A549 (cell line): ENCODE measurements at regions of chr17 and their contacts with region 1.

Region 1: GRCh38 chr17:34637548-34638525 is 58.5 kb downstream of the TMEM132E start:
- DNase-seq: peak; percentile 67 to 71
- ATAC-seq: peak; percentile 83 to 98
- H3K4me3 ChIP-seq: no peak overlapping the region
- H3K27ac ChIP-seq: peak overlapping the region in 1 of 2 experiments; percentile 51; a peak in 1 of 6 replicates
- H3K4me1 ChIP-seq: no peaks in the 10 kb centered on the region
- CTCF ChIP-seq: peak; percentile 79
- EP300 ChIP-seq: no peak
- POLR2A ChIP-seq: no peak
- RAD21 ChIP-seq: peak; percentile 72 to 78

Region 2: DNA sequence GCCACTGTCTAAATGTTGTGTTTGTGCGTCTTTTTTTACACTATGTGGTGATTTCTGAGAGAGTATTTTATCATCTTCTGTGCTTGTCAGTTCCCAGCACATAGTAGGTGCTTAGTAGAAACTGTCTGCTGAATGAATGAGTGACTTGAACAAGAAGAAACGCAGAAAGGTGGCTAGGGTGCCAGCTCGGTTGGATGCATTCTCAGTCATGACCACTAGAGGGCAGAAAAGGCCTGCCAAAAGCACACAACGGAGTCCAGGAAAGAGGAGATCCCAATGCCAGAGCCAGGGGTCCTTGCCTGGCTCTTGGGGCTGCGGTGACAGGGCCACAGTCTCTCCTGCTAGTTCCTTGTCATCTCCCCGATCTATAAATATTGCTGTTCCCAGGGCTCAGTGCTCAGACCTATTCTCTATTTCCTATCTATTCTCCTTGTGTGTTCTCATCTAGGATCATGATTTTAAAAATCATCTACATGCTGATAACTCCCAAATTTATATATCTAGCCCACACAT is 217.5 kb before region 1 on chr17:
- CTCF ChIA-PET with region 1: interaction called, 40 read pairs
- POLR2A ChIA-PET with region 1: no interaction called
- DNase-seq: peak; percentile 66 to 81
- ATAC-seq: peak; percentile 60 to 89; a peak in 5 of 6 replicates
- H3K4me3 ChIP-seq: no peak overlapping the region
- H3K27ac ChIP-seq: no peak overlapping the region
- H3K4me1 ChIP-seq: no peaks in the 10 kb centered on the region
- CTCF ChIP-seq: peak; percentile 91
- EP300 ChIP-seq: no peak
- POLR2A ChIP-seq: no peak
- RAD21 ChIP-seq: peak; percentile 91 to 96

Region 3: DNA sequence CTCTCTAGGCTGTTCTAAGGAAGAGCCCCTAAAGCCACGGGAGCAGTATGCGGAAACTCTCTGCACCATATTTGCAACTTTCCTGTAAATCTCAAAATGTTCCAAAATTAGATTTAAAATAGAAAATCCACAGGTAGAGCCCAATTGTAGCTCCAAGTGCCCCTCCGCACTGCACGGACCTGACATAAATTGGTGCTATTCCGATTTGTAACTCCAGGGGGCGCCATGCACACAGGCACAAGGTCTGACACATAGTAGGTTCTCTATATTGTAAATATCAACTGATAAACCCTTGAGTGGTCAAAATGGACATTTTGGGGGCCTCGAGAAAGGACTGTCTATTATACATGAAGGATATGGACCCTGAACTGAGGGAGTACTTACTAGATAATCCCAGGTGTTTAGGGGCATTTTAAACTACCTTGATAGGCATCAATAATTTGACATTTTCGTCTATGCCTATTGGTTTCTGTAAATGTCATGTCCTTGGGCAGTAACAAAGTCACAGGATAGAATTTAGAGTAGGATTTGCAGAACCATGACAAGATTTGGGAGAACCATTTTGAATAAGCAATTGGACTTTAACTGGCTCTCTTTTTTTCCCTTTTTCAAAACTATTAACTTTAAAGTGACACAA is 95.0 kb before region 1 on chr17:
- CTCF ChIA-PET with region 1: interaction called, 44 read pairs
- POLR2A ChIA-PET with region 1: no interaction called
- DNase-seq: peak; percentile 30 to 40
- ATAC-seq: peak in 1 of 2 experiments; percentile 83; a peak in 3 of 6 replicates
- H3K4me3 ChIP-seq: no peak overlapping the region
- H3K27ac ChIP-seq: no peak overlapping the region
- H3K4me1 ChIP-seq: no peaks in the 10 kb centered on the region
- CTCF ChIP-seq: peak; percentile 94
- EP300 ChIP-seq: no peak
- POLR2A ChIP-seq: no peak
- RAD21 ChIP-seq: peak; percentile 86 to 89

Region 4: DNA sequence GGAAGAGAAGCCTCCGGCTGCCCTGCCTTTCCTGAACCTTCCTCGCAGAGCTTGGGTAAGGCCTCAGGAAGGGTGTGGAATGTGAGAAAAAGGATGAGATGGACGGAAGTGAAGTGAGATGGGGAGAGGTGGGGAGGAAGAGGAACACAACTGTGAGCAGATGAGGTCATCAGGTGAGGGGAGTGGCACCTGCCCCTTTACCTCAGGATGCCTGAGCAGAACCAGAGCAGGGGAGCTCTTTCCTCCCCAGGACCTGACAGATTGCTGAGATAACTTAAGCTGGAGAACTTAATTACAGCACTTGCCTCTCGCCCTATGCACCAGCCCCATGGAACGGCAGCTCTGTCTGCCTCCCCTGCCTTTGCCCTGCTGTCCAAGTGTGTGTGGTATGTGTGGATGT is 28.6 kb before region 1 on chr17:
- CTCF ChIA-PET with region 1: interaction called, 10 read pairs
- POLR2A ChIA-PET with region 1: no interaction called
- DNase-seq: no peak
- ATAC-seq: 0 out of 6 replicates have a peak, but pooled peaks of 1 of the 2 experiments have one; percentile 35
- H3K4me3 ChIP-seq: no peak overlapping the region
- H3K27ac ChIP-seq: no peak overlapping the region
- H3K4me1 ChIP-seq: no peaks in the 10 kb centered on the region
- CTCF ChIP-seq: no peak
- EP300 ChIP-seq: no peak
- POLR2A ChIP-seq: no peak
- RAD21 ChIP-seq: no peak

Region 5: GRCh38 chr17:34626141-34626681 is 11.6 kb before region 1 on chr17:
- CTCF ChIA-PET with region 1: interaction called, 49 read pairs
- POLR2A ChIA-PET with region 1: no interaction called
- DNase-seq: peak in 1 of 2 experiments; percentile 9
- ATAC-seq: peak in 1 of 2 experiments; percentile 65; a peak in 3 of 6 replicates
- H3K4me3 ChIP-seq: no peak overlapping the region
- H3K27ac ChIP-seq: no peak overlapping the region
- H3K4me1 ChIP-seq: no peaks in the 10 kb centered on the region
- CTCF ChIP-seq: no peak
- EP300 ChIP-seq: no peak
- POLR2A ChIP-seq: no peak
- RAD21 ChIP-seq: no peak

Region 6: DNA sequence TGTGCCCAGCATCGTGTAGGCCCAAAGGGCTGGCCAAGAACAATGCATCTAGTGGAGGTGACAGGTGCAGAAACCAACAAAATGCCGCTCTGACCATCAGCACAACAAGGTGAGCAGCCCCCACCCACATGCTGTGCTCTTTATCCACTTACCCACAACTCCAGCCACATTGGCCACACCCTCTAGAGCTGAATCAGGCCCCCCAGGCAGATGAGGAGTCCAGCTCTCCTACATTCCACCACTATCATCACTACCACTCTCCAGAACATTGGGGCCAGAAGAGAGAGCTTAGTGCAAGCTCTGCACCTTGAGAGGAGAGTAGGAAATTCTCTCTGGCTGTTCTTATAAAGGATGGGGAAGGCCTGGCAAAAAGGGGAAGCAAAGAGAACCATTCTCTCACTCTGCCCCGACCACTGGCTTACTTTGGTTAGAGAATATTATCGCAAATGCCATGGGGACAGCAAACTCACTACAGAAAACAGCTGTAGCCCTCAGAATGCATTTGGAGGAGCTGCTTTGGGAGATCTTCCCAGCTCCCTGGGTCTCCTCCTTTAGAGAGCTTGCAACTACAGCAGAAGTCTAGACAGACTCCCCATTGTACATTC is 16.5 kb after region 1 on chr17:
- CTCF ChIA-PET with region 1: interaction called, 47 read pairs
- POLR2A ChIA-PET with region 1: no interaction called
- DNase-seq: no peak
- ATAC-seq: no peak
- H3K4me3 ChIP-seq: no peak overlapping the region
- H3K27ac ChIP-seq: no peak overlapping the region
- H3K4me1 ChIP-seq: no peaks in the 10 kb centered on the region
- CTCF ChIP-seq: no peak
- EP300 ChIP-seq: no peak
- POLR2A ChIP-seq: no peak
- RAD21 ChIP-seq: no peak

Region 7: DNA sequence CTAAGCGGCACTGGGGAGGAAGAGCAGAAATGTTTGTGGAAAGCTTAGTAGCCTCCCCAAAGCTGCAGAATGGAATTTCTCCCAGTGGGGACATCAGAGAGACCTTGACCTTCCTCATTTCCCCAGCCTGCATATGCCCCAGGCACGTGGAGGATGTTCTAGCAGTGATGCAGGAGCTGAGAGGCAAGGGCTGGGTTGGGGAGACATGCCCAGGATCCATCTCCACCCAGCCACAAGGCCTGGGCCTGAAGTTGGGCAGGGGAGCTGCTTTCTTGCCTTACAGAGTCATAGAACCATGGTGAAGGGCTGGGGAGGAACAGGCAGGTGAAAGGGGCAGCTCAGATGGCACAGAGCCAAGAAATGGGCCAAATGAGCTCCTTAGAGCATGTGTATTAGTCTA is 45.6 kb after region 1 on chr17:
- CTCF ChIA-PET with region 1: no interaction called
- POLR2A ChIA-PET with region 1: no interaction called
- DNase-seq: no peak
- ATAC-seq: no peak
- H3K4me3 ChIP-seq: no peak overlapping the region
- H3K27ac ChIP-seq: no peak overlapping the region
- H3K4me1 ChIP-seq: no peaks in the 10 kb centered on the region
- CTCF ChIP-seq: no peak
- EP300 ChIP-seq: no peak
- POLR2A ChIP-seq: no peak
- RAD21 ChIP-seq: no peak

Region 8: DNA sequence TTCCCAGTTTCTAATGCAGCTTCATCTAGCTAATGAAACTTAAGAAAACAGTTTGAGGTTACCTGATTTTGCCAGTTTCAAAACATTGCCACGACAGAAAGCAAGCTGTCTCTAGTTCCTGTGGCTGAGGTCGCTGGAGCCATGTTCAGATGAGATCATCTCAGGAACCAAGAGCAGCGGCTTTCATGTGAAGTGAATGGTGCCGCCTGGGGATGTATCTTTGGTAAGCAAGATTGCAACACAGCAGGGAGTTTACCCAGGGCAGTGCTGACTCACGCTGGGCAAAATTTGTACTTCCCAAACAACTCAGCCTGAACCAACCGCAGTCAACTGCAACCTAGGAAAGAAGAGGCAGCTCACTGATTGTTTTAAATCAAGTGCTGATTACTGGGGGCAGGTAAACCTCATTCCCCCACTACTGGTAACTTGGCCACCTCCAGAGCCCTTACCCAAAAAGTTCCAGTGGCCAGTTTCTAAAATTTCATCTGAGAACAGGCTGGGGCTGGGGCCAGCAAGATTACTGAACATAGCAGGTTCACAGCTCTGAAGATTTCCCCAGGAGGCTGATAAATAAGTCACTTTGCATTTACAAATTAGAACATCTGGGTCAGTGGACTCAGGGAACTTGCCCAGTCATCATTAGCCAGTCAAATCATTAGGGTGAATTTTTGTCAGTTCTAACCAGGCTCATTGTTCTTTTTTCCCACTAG is 425.8 kb after region 1 on chr17 and contains the start of gene RFFL:
- CTCF ChIA-PET with region 1: no interaction called
- POLR2A ChIA-PET with region 1: no interaction called
- DNase-seq: peak; percentile 99
- ATAC-seq: peak; percentile 97 to 100
- H3K4me3 ChIP-seq: peak within 1 kb of the TSS; percentile 38
- H3K27ac ChIP-seq: peak within 1 kb of the TSS; percentile 92 to 93
- H3K4me1 ChIP-seq: peaks cover 59% of the 10 kb centered on the region
- CTCF ChIP-seq: no peak
- EP300 ChIP-seq: peak; percentile 61 to 86; a peak in 3 of 5 replicates
- POLR2A ChIP-seq: peak; percentile 31
- RAD21 ChIP-seq: peak; percentile 56 to 67
- polyA plus RNA-seq, gene RFFL: 35.5 and 49.4 TPM in 2 replicates

Region 9: GRCh38 chr17:35127751-35128514 is 490.1 kb after region 1 on chr17:
- CTCF ChIA-PET with region 1: no interaction called
- POLR2A ChIA-PET with region 1: no interaction called
- DNase-seq: no peak
- ATAC-seq: no peak; a peak in 2 of 6 replicates
- H3K4me3 ChIP-seq: no peak overlapping the region
- H3K27ac ChIP-seq: no peak overlapping the region
- H3K4me1 ChIP-seq: no peaks in the 10 kb centered on the region
- CTCF ChIP-seq: no peak
- EP300 ChIP-seq: no peak
- POLR2A ChIP-seq: no peak
- RAD21 ChIP-seq: no peak